CD8-positive, alpha-beta memory T cell (primary cell): ENCODE measurements at regions of chr10 and their contacts with region 1.

Region 1: GRCh38 chr10:110871298-110872084 is at the start of gene PDCD4:
- DNase-seq: peak; percentile 91 to 97 (median 95)
- H3K4me3 ChIP-seq: peak within 1 kb of the TSS; percentile 68
- H3K4me3 Mint-ChIP-seq: peak within 1 kb of the TSS; percentile 90 to 100 (median 95)
- H3K27ac ChIP-seq: peak within 1 kb of the TSS; percentile 77
- H3K27ac Mint-ChIP-seq: peak within 1 kb of the TSS; percentile 97 to 100 (median 98)
- H3K4me1 ChIP-seq: peaks cover 74% of the 10 kb centered on the region
- H3K4me1 Mint-ChIP-seq: peaks cover 68 to 77% (median 69%) of the 10 kb centered on the region in 3 donors
- H3K27me3 ChIP-seq: no peaks in the 10 kb centered on the region
- H3K27me3 Mint-ChIP-seq: peaks cover 0 to 1% of the 10 kb centered on the region in 2 donors
- total RNA-seq, gene PDCD4: 88.4 to 96.1 TPM

Region 2: GRCh38 chr10:110698782-110699201 is 172.7 kb before region 1 on chr10:
- CTCF ChIA-PET with region 1: no interaction called
- POLR2A ChIA-PET with region 1: no interaction called
- DNase-seq: no peak
- H3K4me3 ChIP-seq: no peak overlapping the region
- H3K4me3 Mint-ChIP-seq: no peak overlapping the region
- H3K27ac ChIP-seq: no peak overlapping the region
- H3K27ac Mint-ChIP-seq: no peak overlapping the region
- H3K4me1 ChIP-seq: no peaks in the 10 kb centered on the region
- H3K4me1 Mint-ChIP-seq: no peaks in the 10 kb centered on the region
- H3K27me3 ChIP-seq: no peaks in the 10 kb centered on the region
- H3K27me3 Mint-ChIP-seq: peaks cover 8 to 20% of the 10 kb centered on the region in 2 donors

Region 3: GRCh38 chr10:110857265-110858158 is 14.0 kb before region 1 on chr10:
- CTCF ChIA-PET with region 1: interaction called, 11 read pairs
- POLR2A ChIA-PET with region 1: interaction called, 54 read pairs
- DNase-seq: peak in 1 of 5 donors; percentile 24
- H3K4me3 ChIP-seq: peak overlapping the region; percentile 23
- H3K4me3 Mint-ChIP-seq: peak overlapping the region; percentile 37 to 79 (median 57)
- H3K27ac ChIP-seq: no peak overlapping the region
- H3K27ac Mint-ChIP-seq: peak overlapping the region; percentile 82 to 98 (median 90)
- H3K4me1 ChIP-seq: peaks cover 90% of the 10 kb centered on the region
- H3K4me1 Mint-ChIP-seq: peaks cover 86 to 91% (median 90%) of the 10 kb centered on the region in 3 donors
- H3K27me3 ChIP-seq: no peaks in the 10 kb centered on the region
- H3K27me3 Mint-ChIP-seq: no peaks in the 10 kb centered on the region

Region 4: GRCh38 chr10:110883924-110884323 is 12.4 kb after region 1 on chr10:
- CTCF ChIA-PET with region 1: interaction called, 5 read pairs
- POLR2A ChIA-PET with region 1: interaction called, 12 read pairs
- DNase-seq: no peak
- H3K4me3 ChIP-seq: peak overlapping the region; percentile 36
- H3K4me3 Mint-ChIP-seq: peak overlapping the region; percentile 79 to 89 (median 86)
- H3K27ac ChIP-seq: no peak overlapping the region
- H3K27ac Mint-ChIP-seq: peak overlapping the region; percentile 81 to 95 (median 90)
- H3K4me1 ChIP-seq: peaks cover 66% of the 10 kb centered on the region
- H3K4me1 Mint-ChIP-seq: peaks cover 71 to 88% (median 86%) of the 10 kb centered on the region in 3 donors
- H3K27me3 ChIP-seq: no peaks in the 10 kb centered on the region
- H3K27me3 Mint-ChIP-seq: no peaks in the 10 kb centered on the region